Astrocyte of the cerebellum (primary cell): ENCODE measurements at regions of chr16 and their contacts with region 1.

Region 1: GRCh38 chr16:77822661-77823060 is 34.3 kb downstream of the VAT1L start:
- DNase-seq: no peak
- H3K4me3 ChIP-seq: no peak overlapping the region
- CTCF ChIP-seq: no peak

Region 2: DNA sequence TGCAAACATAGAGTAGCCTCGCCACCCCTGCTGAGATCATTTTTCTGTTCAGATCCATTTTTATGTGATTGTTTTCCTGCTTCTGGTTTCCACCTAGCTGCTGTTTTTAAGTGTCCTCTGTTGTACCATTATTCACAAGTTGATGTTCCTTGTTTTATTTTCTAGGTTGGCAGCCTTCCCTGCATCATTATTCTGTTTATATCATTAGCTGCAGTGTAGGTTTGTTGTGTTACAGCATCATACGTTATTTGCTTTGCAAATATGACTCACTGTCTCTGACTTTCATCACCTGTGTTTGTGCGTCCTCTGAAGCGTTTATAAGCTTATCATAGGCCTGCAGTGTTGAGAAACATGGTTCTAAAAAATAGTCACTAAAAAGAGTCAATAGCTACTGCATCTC is 82.8 kb after region 1 on chr16:
- in situ Hi-C with region 1: loop called (anchors 5 kb)
- DNase-seq: no peak
- H3K4me3 ChIP-seq: no peak overlapping the region
- CTCF ChIP-seq: no peak

Region 3: DNA sequence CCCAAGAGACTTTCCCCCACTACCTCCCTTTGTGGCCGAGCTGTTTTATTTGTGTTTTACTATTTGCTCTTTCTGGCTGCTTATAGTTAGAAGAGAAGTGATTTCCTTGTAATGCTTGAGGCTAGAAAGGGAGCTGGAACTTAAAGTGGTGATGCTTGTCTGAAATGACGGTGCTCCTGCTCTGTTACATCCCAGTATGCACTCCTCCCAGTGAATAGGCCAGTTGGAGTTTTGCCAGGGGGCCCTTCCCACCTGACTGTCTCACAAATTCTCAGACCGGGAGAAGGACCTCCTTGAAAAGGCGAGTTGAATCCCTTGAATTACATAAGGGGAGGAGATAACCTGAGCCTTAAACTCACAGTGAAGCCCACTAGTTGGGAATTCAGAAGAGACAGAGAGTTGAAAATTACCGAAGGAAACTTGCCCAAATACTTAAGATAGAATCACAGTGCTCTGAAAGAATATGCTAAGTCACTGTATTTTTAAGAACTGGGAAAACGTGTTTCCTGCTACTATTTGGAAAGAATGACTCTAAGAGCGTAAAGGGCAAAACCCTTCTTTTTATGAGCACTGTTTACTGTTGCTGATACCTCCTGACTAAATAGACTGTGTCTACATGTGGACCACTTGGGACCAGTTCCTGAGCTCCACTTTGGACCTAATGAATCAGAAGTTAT is 115.0 kb after region 1 on chr16:
- in situ Hi-C with region 1: no loop called
- DNase-seq: no peak
- H3K4me3 ChIP-seq: no peak overlapping the region
- CTCF ChIP-seq: no peak